ENCODE measurements at regions of chr1 and their contacts with region 1.

Region 1: GRCh38 chr1:169133801-169134502 is 27.5 kb downstream of the ATP1B1 start:
- DNase-seq: no peak
- H3K4me3 Mint-ChIP-seq: no peak overlapping the region
- H3K27ac Mint-ChIP-seq: no peak overlapping the region
- H3K4me1 Mint-ChIP-seq: peaks cover 5% of the 10 kb centered on the region
- H3K27me3 Mint-ChIP-seq: no peaks in the 10 kb centered on the region

Region 2: DNA sequence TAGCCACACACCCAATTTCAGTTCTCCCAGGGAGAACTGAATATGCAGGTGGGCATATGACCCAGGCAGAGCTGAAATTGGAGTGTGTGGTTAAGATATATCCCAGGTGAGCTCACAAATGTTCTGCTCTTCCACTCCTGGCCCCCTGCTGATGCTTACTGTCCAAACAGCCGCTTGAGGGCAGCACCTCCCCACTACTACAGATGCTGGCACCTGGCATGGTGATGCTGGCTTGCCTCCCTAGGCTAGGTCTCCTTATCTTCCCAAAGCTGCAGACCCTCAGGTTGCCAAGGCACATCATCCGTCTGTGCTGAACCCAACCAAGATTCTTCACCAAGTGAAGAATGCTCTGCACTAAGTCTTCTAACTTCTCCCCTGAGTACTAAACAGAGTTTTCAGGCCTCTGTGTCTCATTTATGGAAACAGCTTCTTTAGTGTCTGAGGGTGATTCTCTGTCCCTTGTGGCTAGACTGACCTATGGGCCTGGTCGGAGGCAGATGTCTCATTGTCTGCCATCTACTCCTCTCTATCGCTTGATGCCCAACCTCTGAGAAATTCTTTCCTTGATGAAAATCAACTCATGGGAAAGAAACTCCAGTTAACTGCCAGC is 530.3 kb before region 1 on chr1:
- CTCF ChIA-PET with region 1: interaction called, 20 read pairs
- DNase-seq: peak; percentile 82
- H3K4me3 Mint-ChIP-seq: no peak overlapping the region
- H3K27ac Mint-ChIP-seq: no peak overlapping the region
- H3K4me1 Mint-ChIP-seq: no peaks in the 10 kb centered on the region
- H3K27me3 Mint-ChIP-seq: peaks cover 12% of the 10 kb centered on the region

Region 3: GRCh38 chr1:169326956-169327268 is 193.0 kb after region 1 on chr1:
- CTCF ChIA-PET with region 1: no interaction called
- DNase-seq: no peak
- H3K4me3 Mint-ChIP-seq: no peak overlapping the region
- H3K27ac Mint-ChIP-seq: no peak overlapping the region
- H3K4me1 Mint-ChIP-seq: no peaks in the 10 kb centered on the region
- H3K27me3 Mint-ChIP-seq: no peaks in the 10 kb centered on the region